HepG2 (cell line): ENCODE measurements at regions of chr6 and their contacts with region 1.

Region 1: DNA sequence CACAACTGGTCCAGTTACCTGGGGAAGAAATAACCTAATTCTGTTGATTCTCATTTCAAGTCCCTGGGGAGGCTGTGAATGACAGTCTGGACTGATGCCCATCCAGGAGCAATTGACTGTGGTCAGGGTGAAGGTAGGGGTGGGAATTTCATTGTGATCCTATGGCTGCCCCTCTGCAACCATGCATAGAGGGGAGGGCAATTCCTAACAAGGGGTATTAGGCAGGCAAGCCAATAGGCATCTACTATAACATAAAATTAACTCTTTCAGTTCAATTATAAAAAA is 44.0 kb upstream of the TRAM2 start:
- DNase-seq: no peak
- ATAC-seq: no peak; the same call in 2 of the 3 replicates
- H3K4me3 ChIP-seq: no peak overlapping the region
- H3K27ac ChIP-seq: no peak overlapping the region
- H3K4me1 ChIP-seq: peaks cover 15% of the 10 kb centered on the region
- H3K27me3 ChIP-seq: no peaks in the 10 kb centered on the region
- CTCF ChIP-seq: no peak
- EP300 ChIP-seq: no peak
- POLR2A ChIP-seq: no peak
- RAD21 ChIP-seq: no peak

Region 2: GRCh38 chr6:52634211-52634610 is 13.4 kb after region 1 on chr6:
- CTCF ChIA-PET with region 1: no interaction called
- POLR2A ChIA-PET with region 1: no interaction called
- in situ Hi-C with region 1: no loop called
- intact Hi-C with region 1: loop called (anchors 1 kb)
- DNase-seq: no peak
- ATAC-seq: no peak
- H3K4me3 ChIP-seq: no peak overlapping the region
- H3K27ac ChIP-seq: no peak overlapping the region
- H3K4me1 ChIP-seq: peaks cover 32% of the 10 kb centered on the region
- H3K27me3 ChIP-seq: no peaks in the 10 kb centered on the region; a peak in 1 of 5 replicates
- CTCF ChIP-seq: no peak
- EP300 ChIP-seq: no peak
- POLR2A ChIP-seq: no peak
- RAD21 ChIP-seq: no peak